Activated CD8-positive, alpha-beta T cell treated with anti-CD3 and anti-CD28 coated beads for 36 hours (primary cell): ENCODE measurements at regions of chr11 and their contacts with region 1.

Region 1: GRCh38 chr11:72238040-72238450 is 5.9 kb downstream of the PHOX2A start:
- DNase-seq: peak; percentile 59
- ATAC-seq: peak; percentile 83
- H3K4me3 Mint-ChIP-seq: no peak overlapping the region
- H3K27ac Mint-ChIP-seq: no peak overlapping the region
- H3K4me1 Mint-ChIP-seq: peaks cover 15% of the 10 kb centered on the region
- H3K27me3 Mint-ChIP-seq: peaks cover 33% of the 10 kb centered on the region
- CTCF ChIP-seq: peak; percentile 73

Region 2: GRCh38 chr11:72173291-72173690 is 64.8 kb before region 1 on chr11:
- CTCF ChIA-PET with region 1: no interaction called
- POLR2A ChIA-PET with region 1: no interaction called
- intact Hi-C with region 1: no loop called
- DNase-seq: no peak
- ATAC-seq: no peak
- H3K4me3 Mint-ChIP-seq: no peak overlapping the region
- H3K27ac Mint-ChIP-seq: no peak overlapping the region
- H3K4me1 Mint-ChIP-seq: no peaks in the 10 kb centered on the region
- H3K27me3 Mint-ChIP-seq: peaks cover 3% of the 10 kb centered on the region
- CTCF ChIP-seq: no peak

Region 3: DNA sequence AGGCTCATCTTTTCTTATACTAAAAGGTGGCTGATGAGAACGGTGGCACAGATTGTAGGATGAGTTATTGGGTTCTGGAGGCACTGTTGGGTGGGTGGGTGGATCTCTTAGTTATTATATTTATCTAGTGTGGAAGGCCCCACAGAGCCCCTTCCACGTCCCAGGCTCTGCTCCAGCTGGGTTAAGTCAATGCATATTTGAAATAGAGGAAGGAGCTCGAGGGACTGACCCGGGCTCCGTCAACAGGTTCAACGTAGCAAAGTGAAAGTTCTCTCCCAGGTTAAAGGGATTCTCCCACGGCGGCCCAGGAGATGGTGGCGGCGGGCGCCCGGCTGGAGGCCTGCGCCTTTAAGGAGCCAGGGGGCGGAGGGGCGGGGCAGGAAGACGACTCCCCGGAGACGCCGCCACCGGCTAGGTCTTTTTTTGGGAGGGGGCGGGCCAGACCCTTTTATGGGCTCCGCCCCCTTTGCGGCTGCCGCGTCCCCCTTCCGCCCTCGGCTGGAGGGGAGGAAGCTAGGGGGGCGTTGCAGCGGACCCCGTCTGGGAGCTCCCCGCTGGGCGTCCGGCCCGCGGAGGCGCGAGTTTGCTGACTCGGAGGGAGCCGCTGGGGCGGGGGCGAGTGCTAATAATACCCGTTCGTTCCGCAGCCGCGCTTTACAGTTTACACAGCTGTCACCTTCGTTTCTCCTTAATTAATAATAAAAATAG is 15.0 kb before region 1 on chr11:
- CTCF ChIA-PET with region 1: interaction called, 23 read pairs
- POLR2A ChIA-PET with region 1: interaction called, 17 read pairs
- intact Hi-C with region 1: no loop called
- DNase-seq: peak; percentile 97
- ATAC-seq: peak; percentile 78
- H3K4me3 Mint-ChIP-seq: peak overlapping the region; percentile 78
- H3K27ac Mint-ChIP-seq: peak overlapping the region; percentile 82
- H3K4me1 Mint-ChIP-seq: peaks cover 23% of the 10 kb centered on the region
- H3K27me3 Mint-ChIP-seq: peaks cover 2% of the 10 kb centered on the region
- CTCF ChIP-seq: no peak